CD4-positive, alpha-beta memory T cell (primary cell): ENCODE measurements at regions of chr3 and their contacts with region 1.

Region 1: GRCh38 chr3:48400824-48401433 is 28.9 kb downstream of the FBXW12 start:
- DNase-seq: peak; percentile 67 to 77 (median 72)
- H3K4me3 ChIP-seq: no peak overlapping the region
- H3K4me3 Mint-ChIP-seq: no peak overlapping the region
- H3K27ac ChIP-seq: no peak overlapping the region
- H3K27ac Mint-ChIP-seq: peak overlapping the region in 2 of 7 donors; percentile 3 to 8
- H3K4me1 ChIP-seq: no peaks in the 10 kb centered on the region
- H3K4me1 Mint-ChIP-seq: peaks cover 0 to 2% (median 0%) of the 10 kb centered on the region in 4 donors
- H3K27me3 ChIP-seq: no peaks in the 10 kb centered on the region
- H3K27me3 Mint-ChIP-seq: peaks cover under 1 to 2% of the 10 kb centered on the region in 2 donors

Region 2: DNA sequence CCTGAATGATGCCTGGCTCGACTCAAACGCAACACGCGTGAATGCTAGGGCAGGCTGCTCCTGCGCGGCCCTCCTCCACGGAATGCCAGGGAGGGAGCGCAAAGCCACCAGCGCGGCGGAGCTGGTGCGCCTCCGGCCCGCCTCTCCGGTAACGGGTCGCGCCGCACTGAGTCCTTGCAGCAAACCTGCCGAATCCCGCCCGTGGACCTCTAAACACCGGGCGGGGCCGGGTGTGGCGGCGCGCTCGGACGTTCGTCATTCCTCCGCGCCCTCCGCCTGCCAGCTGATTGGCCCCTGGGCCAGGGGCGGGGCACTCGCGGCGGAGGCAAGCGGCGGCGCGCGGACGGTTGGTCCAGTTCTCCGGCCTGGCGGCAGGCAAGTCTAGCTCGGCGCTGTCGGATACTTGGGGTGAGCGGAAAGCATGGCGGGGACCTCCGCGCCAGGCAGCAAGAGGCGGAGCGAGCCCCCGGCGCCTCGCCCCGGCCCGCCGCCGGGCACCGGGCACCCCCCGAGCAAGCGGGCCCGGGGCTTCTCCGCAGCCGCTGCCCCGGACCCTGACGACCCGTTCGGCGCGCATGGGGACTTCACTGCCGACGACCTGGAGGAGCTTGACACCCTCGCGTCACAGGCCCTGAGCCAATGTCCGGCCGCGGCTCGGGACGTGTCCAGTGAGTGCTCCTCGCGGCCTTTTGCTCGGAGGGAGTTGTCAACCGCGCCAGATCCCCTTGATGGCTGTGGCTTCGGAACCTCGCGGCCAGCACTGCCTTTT is 45.7 kb after region 1 on chr3 and contains the start of gene ATRIP:
- CTCF ChIA-PET with region 1: interaction called, 30 read pairs
- POLR2A ChIA-PET with region 1: no interaction called
- intact Hi-C with region 1: no loop called
- DNase-seq: peak; percentile 79 to 86 (median 82)
- H3K4me3 ChIP-seq: peak within 1 kb of the TSS; percentile 76 to 84
- H3K4me3 Mint-ChIP-seq: peak within 1 kb of the TSS; percentile 83 to 96 (median 90)
- H3K27ac ChIP-seq: peak within 1 kb of the TSS; percentile 68
- H3K27ac Mint-ChIP-seq: peak within 1 kb of the TSS; percentile 91 to 97 (median 96)
- H3K4me1 ChIP-seq: peaks cover 30% of the 10 kb centered on the region
- H3K4me1 Mint-ChIP-seq: peaks cover 22 to 49% (median 37%) of the 10 kb centered on the region in 4 donors
- H3K27me3 ChIP-seq: no peaks in the 10 kb centered on the region
- H3K27me3 Mint-ChIP-seq: no peaks in the 10 kb centered on the region
- total RNA-seq, gene ATRIP: 14.9 to 15.2 TPM

Region 3: GRCh38 chr3:48507351-48508061 is 106.6 kb after region 1 on chr3:
- CTCF ChIA-PET with region 1: interaction called, 155 read pairs
- POLR2A ChIA-PET with region 1: interaction called, 13 read pairs
- intact Hi-C with region 1: loop called (anchors 1 kb)
- DNase-seq: peak; percentile 75 to 84 (median 77)
- H3K4me3 ChIP-seq: no peak overlapping the region
- H3K4me3 Mint-ChIP-seq: peak overlapping the region in 7 of 8 donors; percentile 42 to 77 (median 64)
- H3K27ac ChIP-seq: peak overlapping the region; percentile 27
- H3K27ac Mint-ChIP-seq: peak overlapping the region; percentile 83 to 92 (median 86)
- H3K4me1 ChIP-seq: peaks cover 62% of the 10 kb centered on the region
- H3K4me1 Mint-ChIP-seq: peaks cover 36 to 62% (median 50%) of the 10 kb centered on the region in 4 donors
- H3K27me3 ChIP-seq: no peaks in the 10 kb centered on the region
- H3K27me3 Mint-ChIP-seq: no peaks in the 10 kb centered on the region

Region 4: GRCh38 chr3:48548729-48549705 is 148.1 kb after region 1 on chr3:
- CTCF ChIA-PET with region 1: interaction called, 330 read pairs
- POLR2A ChIA-PET with region 1: interaction called, 11 read pairs
- intact Hi-C with region 1: no loop called
- DNase-seq: peak; percentile 77 to 82 (median 78)
- H3K4me3 ChIP-seq: no peak overlapping the region
- H3K4me3 Mint-ChIP-seq: no peak overlapping the region
- H3K27ac ChIP-seq: no peak overlapping the region
- H3K27ac Mint-ChIP-seq: peak overlapping the region in 2 of 7 donors; percentile 17 to 35
- H3K4me1 ChIP-seq: peaks cover 8% of the 10 kb centered on the region
- H3K4me1 Mint-ChIP-seq: peaks cover 5 to 21% (median 6%) of the 10 kb centered on the region in 4 donors
- H3K27me3 ChIP-seq: no peaks in the 10 kb centered on the region
- H3K27me3 Mint-ChIP-seq: no peaks in the 10 kb centered on the region

Region 5: GRCh38 chr3:48685602-48686511 is 284.9 kb after region 1 on chr3 and contains the start of gene NCKIPSD:
- CTCF ChIA-PET with region 1: interaction called, 5 read pairs
- POLR2A ChIA-PET with region 1: no interaction called
- intact Hi-C with region 1: loop called (anchors 1 kb)
- DNase-seq: peak; percentile 87 to 94 (median 90)
- H3K4me3 ChIP-seq: peak within 1 kb of the TSS; percentile 59 to 82
- H3K4me3 Mint-ChIP-seq: peak within 1 kb of the TSS; percentile 87 to 99 (median 94)
- H3K27ac ChIP-seq: peak within 1 kb of the TSS; percentile 77
- H3K27ac Mint-ChIP-seq: peak within 1 kb of the TSS; percentile 81 to 94 (median 92)
- H3K4me1 ChIP-seq: peaks cover 34% of the 10 kb centered on the region
- H3K4me1 Mint-ChIP-seq: peaks cover 17 to 49% (median 27%) of the 10 kb centered on the region in 4 donors
- H3K27me3 ChIP-seq: no peaks in the 10 kb centered on the region
- H3K27me3 Mint-ChIP-seq: no peaks in the 10 kb centered on the region
- total RNA-seq, gene NCKIPSD: 20.1 to 21.7 TPM